Right ventricle myocardium inferior (tissue), 1 donor: ENCODE measurements at regions of chr4 and their contacts with region 1.

Region 1: DNA sequence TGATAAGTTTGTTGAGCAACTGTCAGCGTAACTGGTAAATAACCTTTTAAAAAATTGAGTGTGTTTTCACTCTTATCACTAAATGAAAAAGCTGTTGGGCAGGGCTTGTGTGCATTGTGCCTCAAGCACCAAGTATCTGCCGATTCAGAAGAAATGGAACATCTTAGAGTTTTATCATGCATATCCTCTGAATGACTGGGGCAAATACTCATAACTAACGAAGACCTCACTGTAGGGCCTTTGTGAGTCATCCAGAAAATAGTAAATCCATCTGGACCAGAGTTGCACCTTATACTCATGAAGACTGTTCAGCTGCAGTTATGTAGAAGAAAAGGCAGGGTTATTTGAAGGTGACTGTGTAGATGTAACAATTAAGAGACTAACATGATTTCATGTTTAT is 222.1 kb downstream of the CAMK2D start:
- DNase-seq: no peak
- ATAC-seq: no peak

Region 2: DNA sequence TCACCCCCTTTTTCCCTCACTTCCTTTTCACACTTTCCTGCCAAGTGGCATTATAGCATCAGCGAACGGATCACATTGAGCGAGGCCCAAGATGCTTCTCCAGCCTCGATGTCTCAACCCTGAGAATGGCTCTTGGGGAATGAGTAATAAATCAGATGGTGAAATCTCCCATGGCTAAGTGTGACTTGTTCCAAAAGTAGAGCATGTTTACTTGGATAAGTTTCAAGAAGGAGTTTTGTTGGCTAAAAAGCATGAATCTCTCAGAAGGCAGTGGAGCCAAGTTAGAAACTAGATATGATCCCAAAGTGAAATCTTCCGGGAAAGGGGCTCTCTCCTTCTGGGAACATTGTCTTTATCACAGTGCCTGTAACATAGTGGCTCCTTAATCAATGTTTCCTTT is 94.1 kb before region 1 on chr4:
- intact Hi-C with region 1: loop called (anchors 5 kb)
- DNase-seq: peak; percentile 65
- ATAC-seq: peak; percentile 85